ENCODE measurements at regions of chr3 and their contacts with region 1.

Region 1: DNA sequence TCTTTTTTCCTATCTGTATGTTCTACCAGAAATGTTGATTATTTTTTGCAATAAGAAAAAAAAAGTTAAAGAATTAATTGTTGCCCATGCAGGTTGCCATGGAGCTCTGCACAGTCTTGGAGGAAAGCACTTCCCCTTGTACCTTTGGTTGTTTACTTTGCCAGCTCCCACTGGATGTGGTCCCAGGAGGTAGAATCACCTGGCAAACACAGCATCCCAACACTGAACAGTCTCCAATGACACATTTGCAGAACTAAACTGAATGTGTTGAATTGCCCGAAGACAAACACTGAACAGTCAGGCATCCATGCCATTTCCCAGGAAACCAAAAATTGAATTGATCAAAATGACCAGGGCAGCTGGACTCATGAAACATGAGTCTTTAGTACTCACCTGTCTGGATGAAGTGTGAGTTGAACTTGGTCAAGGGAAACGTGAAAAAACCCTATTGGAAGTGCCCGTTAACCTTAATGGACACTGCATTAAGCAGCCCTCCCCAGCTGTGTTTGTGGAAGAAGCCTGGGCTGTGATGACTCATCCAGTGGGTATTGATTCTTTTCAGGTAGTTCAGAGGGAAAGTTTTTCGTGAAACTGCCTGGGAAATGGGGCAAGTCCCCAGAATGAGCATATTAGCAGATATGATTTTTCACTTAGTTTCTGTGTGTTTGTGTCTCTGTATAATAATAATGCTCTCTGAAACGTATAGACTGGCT is 284.7 kb upstream of the STT3B start:
- DNase-seq: peak; percentile 73
- H3K4me3 Mint-ChIP-seq: no peak overlapping the region
- H3K27ac Mint-ChIP-seq: no peak overlapping the region
- H3K4me1 Mint-ChIP-seq: peaks cover 53% of the 10 kb centered on the region
- H3K27me3 Mint-ChIP-seq: peaks cover 4% of the 10 kb centered on the region

Region 2: DNA sequence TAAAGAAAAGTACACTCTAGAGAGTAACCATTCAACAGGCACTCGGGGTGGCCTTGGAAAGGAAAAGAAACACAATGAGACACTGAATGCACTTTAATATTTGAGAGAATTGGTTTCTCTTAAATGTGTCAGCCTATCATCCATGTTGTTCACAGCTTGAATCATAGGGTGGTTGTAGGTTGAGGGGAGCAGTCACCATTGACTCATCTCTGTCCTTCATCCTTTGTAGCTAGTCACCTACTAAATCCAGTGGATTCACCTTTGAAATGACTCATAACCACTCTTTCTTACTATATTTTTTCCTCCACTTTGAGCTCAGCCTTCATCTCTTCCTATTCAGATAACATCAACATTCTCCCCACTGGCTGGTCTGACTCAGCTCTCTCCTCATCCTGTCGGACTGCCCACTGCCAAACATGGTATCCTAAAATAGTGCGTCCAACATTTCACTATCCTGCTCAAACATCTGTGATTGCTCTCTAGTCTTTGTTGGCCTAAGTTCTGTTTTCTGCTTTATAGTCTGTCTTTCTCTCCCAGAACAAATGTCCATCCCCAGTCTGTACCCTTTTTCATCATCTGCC is 170.9 kb before region 1 on chr3:
- CTCF ChIA-PET with region 1: interaction called, 3 read pairs
- intact Hi-C with region 1: loop called (anchors 1 kb)
- DNase-seq: peak; percentile 72
- H3K4me3 Mint-ChIP-seq: no peak overlapping the region
- H3K27ac Mint-ChIP-seq: peak overlapping the region; percentile 4
- H3K4me1 Mint-ChIP-seq: peaks cover 18% of the 10 kb centered on the region
- H3K27me3 Mint-ChIP-seq: no peaks in the 10 kb centered on the region

Region 3: DNA sequence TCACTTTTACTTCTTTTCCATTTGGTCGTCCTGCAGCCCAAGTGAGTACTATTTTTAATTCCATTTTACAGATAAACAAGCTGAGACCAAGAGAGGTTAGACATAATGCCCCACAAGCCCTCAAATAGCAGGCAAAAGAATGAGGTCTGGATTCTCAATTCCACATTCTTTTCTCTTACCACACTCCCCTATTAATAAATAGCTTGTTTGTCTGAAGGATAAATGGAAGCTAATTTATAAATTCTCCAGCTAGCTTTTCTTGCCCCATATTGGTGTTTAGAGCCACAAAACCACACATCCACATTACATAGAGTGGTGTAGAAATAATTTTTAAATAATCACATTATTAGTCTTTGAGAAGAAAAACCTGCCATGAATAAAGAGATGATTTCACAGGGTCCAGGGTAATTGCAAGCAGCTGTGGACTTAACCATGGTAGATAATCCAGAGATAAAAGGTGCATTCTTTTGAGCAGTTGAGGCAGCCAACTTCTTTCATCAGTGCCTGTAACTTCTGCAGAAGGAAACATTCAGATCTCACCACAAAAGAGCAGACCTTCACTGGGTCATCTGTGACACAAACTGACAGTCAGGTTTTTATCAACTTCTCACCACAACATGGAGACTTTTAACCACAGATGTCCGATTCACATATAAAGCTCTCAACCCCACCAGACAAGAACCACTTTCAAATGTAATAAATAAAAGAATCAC is 28.7 kb before region 1 on chr3:
- CTCF ChIA-PET with region 1: interaction called, 5 read pairs
- intact Hi-C with region 1: loop called (anchors 1 kb)
- DNase-seq: no peak
- H3K4me3 Mint-ChIP-seq: no peak overlapping the region
- H3K27ac Mint-ChIP-seq: no peak overlapping the region
- H3K4me1 Mint-ChIP-seq: peaks cover 89% of the 10 kb centered on the region
- H3K27me3 Mint-ChIP-seq: no peaks in the 10 kb centered on the region

Region 4: DNA sequence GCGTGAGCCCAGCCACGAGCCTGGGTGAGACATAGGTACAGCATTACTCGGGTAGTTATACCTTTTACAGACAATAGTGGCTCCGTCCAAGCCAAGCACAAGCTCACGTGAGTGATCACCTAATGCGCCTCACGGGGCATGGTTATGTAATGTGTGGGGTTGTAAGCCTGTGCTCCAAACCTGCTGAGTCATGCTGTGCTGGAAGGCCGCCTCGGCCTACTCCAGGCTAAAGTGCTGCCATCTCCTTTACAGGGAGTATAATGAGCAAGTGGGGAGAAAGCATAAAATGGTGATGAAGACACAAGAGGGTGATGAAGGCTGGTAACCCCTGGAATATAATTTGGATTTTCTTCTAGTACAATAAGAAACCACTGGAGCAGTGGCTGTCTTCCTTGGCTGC is 108.9 kb after region 1 on chr3:
- CTCF ChIA-PET with region 1: no interaction called
- intact Hi-C with region 1: loop called (anchors 5 kb)
- DNase-seq: peak; percentile 12
- H3K4me3 Mint-ChIP-seq: no peak overlapping the region
- H3K27ac Mint-ChIP-seq: peak overlapping the region; percentile 3
- H3K4me1 Mint-ChIP-seq: peaks cover 18% of the 10 kb centered on the region
- H3K27me3 Mint-ChIP-seq: no peaks in the 10 kb centered on the region

Region 5: DNA sequence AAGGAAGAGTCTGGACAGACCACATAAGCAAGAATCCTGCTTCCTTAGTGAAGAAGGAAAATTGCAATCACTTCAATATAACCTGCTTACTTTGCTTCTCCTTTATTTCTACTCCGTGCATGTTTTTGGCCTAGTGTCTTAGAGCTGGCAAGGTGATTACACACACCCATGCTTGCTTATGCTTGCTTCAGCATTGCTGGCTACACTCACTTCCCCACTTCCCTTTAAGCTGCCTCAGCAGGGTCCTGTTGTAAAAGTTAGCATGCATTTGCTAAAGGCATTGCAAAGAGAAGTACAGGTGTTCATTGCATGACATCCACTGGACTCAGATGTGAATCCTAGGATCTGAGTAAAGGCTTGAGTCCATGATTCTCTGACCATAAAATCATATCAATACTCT is 237.2 kb after region 1 on chr3:
- CTCF ChIA-PET with region 1: no interaction called
- intact Hi-C with region 1: no loop called
- DNase-seq: no peak
- H3K4me3 Mint-ChIP-seq: no peak overlapping the region
- H3K27ac Mint-ChIP-seq: no peak overlapping the region
- H3K4me1 Mint-ChIP-seq: no peaks in the 10 kb centered on the region
- H3K27me3 Mint-ChIP-seq: no peaks in the 10 kb centered on the region

Region 6: DNA sequence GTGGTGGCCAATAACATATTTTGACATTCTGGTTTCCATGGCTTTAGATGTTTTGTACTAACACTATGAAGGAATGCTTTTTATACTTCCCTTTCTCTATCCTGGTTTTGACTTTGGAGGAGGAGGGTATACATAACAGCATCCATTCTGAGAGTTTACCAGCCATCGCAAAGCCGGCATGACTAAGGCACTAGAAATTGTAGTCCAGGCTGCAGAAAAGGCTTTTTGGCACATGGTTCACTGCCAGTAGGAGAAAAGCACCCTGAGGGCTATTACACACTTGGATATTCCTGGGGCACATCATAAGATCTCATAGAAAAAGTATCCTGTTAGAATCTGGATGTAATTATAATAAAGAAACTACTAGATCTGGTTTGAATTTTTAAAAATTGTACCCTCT is 386.5 kb after region 1 on chr3:
- CTCF ChIA-PET with region 1: no interaction called
- intact Hi-C with region 1: loop called (anchors 5 kb)
- DNase-seq: no peak
- H3K4me3 Mint-ChIP-seq: no peak overlapping the region
- H3K27ac Mint-ChIP-seq: peak overlapping the region; percentile 24
- H3K4me1 Mint-ChIP-seq: peaks cover 41% of the 10 kb centered on the region
- H3K27me3 Mint-ChIP-seq: no peaks in the 10 kb centered on the region

Region 7: GRCh38 chr3:32117324-32117723 is 869.3 kb after region 1 on chr3:
- CTCF ChIA-PET with region 1: no interaction called
- intact Hi-C with region 1: loop called (anchors 10 kb)
- DNase-seq: no peak
- H3K4me3 Mint-ChIP-seq: no peak overlapping the region
- H3K27ac Mint-ChIP-seq: no peak overlapping the region
- H3K4me1 Mint-ChIP-seq: peaks cover 61% of the 10 kb centered on the region
- H3K27me3 Mint-ChIP-seq: no peaks in the 10 kb centered on the region

Region 8: DNA sequence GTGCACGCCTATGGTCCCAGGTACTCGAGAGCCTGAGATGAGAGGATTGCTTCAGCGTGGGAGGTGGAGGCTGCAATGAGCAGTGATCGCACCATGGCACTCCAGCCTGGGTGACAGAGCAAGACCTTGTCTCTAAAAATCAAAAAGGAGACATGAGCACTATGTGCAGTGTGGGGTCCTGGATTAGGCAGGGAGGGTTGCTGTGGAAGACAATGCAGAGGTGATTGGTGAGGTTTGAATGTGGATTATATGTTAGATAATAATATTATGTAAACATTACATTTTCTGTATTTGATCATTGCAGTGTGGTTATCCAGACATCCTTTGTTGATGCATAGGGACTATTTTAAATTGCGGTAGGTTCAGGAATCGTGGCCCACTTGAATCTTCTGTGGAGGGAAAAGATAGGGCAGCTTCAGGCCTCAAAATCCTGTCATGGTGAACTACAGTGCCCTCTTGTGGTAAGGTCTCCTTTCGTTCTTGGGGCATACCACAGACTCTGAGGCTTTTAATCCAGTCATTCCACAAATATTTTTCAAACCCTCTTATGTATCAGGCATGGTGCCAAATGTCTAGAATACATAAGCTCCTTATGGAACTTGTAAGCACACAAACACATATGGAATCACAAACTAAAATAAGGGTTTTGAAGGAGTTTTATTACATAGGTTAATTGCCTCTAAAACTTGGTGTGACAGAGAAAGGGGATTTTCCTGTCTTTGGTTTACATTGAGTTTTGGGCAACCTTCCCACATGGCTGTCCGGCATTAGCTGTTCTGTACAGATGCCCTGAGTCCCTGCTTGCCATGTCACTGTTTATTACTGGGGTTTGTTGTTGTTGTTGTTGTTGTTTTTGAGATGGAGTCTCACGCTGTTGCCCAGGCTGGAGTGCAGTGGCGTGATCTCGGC is 896.1 kb after region 1 on chr3:
- CTCF ChIA-PET with region 1: no interaction called
- intact Hi-C with region 1: no loop called
- DNase-seq: peak; percentile 69
- H3K4me3 Mint-ChIP-seq: no peak overlapping the region
- H3K27ac Mint-ChIP-seq: no peak overlapping the region
- H3K4me1 Mint-ChIP-seq: peaks cover under 1% of the 10 kb centered on the region
- H3K27me3 Mint-ChIP-seq: no peaks in the 10 kb centered on the region